Activated naive CD4-positive, alpha-beta T cell treated with anti-CD3 and anti-CD28 coated beads for 36 hours (primary cell): ENCODE measurements at regions of chr2 and their contacts with region 1.

Region 1: GRCh38 chr2:68385220-68385906 is 20.3 kb downstream of the PLEK start:
- DNase-seq: peak; percentile 72
- H3K4me3 Mint-ChIP-seq: no peak overlapping the region
- H3K27ac Mint-ChIP-seq: peak overlapping the region; percentile 9
- H3K4me1 Mint-ChIP-seq: peaks cover 40% of the 10 kb centered on the region
- H3K27me3 Mint-ChIP-seq: peaks cover 5% of the 10 kb centered on the region

Region 2: GRCh38 chr2:67923696-67924095 is 461.7 kb before region 1 on chr2:
- CTCF ChIA-PET with region 1: no interaction called
- intact Hi-C with region 1: no loop called
- DNase-seq: no peak
- H3K4me3 Mint-ChIP-seq: no peak overlapping the region
- H3K27ac Mint-ChIP-seq: no peak overlapping the region
- H3K4me1 Mint-ChIP-seq: no peaks in the 10 kb centered on the region
- H3K27me3 Mint-ChIP-seq: peaks cover 10% of the 10 kb centered on the region

Region 3: DNA sequence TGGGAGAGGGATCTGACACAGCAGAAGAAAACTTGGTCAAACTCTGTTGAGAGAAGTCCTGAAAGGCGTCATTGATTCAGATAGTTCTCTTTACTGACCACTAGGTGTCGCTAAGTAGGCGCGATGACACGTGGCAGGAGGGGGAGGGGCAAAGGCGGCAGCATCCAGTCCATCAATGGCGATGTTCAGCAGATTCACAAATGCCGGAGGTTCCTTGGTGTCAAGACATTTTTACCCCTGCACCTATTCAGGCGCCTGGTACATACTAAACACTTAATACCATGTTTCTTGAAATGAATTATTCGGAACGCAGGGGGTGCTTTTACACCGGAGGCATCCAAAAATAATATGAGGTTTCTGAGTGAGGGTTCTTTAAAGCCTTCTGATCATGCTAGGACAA is 23.3 kb before region 1 on chr2:
- CTCF ChIA-PET with region 1: interaction called, 5 read pairs
- intact Hi-C with region 1: loop called (anchors 1 kb)
- DNase-seq: peak; percentile 88
- H3K4me3 Mint-ChIP-seq: peak overlapping the region; percentile 17
- H3K27ac Mint-ChIP-seq: no peak overlapping the region
- H3K4me1 Mint-ChIP-seq: peaks cover 9% of the 10 kb centered on the region
- H3K27me3 Mint-ChIP-seq: peaks cover 3% of the 10 kb centered on the region

Region 4: GRCh38 chr2:68441179-68441993 is 56.0 kb after region 1 on chr2:
- CTCF ChIA-PET with region 1: interaction called, 13 read pairs
- intact Hi-C with region 1: loop called (anchors 1 kb)
- DNase-seq: peak; percentile 92
- H3K4me3 Mint-ChIP-seq: no peak overlapping the region
- H3K27ac Mint-ChIP-seq: peak overlapping the region; percentile 28
- H3K4me1 Mint-ChIP-seq: peaks cover 15% of the 10 kb centered on the region
- H3K27me3 Mint-ChIP-seq: peaks cover 2% of the 10 kb centered on the region

Region 5: GRCh38 chr2:68766376-68766845 is 381.0 kb after region 1 on chr2:
- CTCF ChIA-PET with region 1: no interaction called
- intact Hi-C with region 1: loop called (anchors 1 kb)
- DNase-seq: peak; percentile 77
- H3K4me3 Mint-ChIP-seq: peak overlapping the region; percentile 77
- H3K27ac Mint-ChIP-seq: peak overlapping the region; percentile 95
- H3K4me1 Mint-ChIP-seq: peaks cover 97% of the 10 kb centered on the region
- H3K27me3 Mint-ChIP-seq: no peaks in the 10 kb centered on the region